PC-9 (cell line): ENCODE measurements at regions of chr1 and their contacts with region 1.

Region 1: GRCh38 chr1:228131766-228132165 is 8.3 kb upstream of the GUK1 start:
- DNase-seq: peak; percentile 27 to 63
- H3K4me3 ChIP-seq: peak overlapping the region; percentile 62; the same call in 1 of the 2 replicates
- H3K27ac ChIP-seq: peak overlapping the region; percentile 82
- H3K4me1 ChIP-seq: peaks cover 16% of the 10 kb centered on the region
- H3K27me3 ChIP-seq: no peaks in the 10 kb centered on the region
- CTCF ChIP-seq: no peak

Region 2: DNA sequence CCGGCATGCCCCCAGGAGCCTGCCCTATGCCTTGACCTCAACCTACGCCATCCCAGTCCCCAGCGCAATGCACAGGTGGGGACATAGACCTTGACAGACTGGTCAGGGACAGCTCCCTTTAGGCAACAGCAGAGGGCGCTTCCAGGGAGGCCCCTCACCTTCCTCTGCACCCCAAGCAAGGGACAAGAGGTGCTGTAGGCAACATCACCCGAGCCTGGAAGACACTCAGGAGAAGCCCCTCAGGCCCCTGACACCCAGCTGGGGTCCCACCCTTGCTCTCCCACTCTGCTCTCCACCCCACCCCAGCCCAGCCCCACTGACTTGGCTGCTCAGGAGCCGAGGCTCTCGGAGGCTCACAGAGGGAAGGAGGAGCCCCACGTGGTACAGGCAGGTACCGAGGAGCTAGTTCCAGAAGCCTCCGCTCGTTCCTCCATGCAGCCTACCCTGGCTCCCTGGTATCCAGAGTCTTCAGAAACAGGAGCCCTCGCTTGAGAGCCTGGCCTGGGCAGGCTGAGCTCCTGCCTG is 127.4 kb before region 1 on chr1:
- CTCF ChIA-PET with region 1: interaction called, 21 read pairs
- POLR2A ChIA-PET with region 1: no interaction called
- intact Hi-C with region 1: loop called (anchors 1 kb)
- DNase-seq: peak; percentile 43 to 59
- H3K4me3 ChIP-seq: no peak overlapping the region
- H3K27ac ChIP-seq: no peak overlapping the region
- H3K4me1 ChIP-seq: no peaks in the 10 kb centered on the region
- H3K27me3 ChIP-seq: peaks cover 13% of the 10 kb centered on the region
- CTCF ChIP-seq: peak; percentile 80

Region 3: DNA sequence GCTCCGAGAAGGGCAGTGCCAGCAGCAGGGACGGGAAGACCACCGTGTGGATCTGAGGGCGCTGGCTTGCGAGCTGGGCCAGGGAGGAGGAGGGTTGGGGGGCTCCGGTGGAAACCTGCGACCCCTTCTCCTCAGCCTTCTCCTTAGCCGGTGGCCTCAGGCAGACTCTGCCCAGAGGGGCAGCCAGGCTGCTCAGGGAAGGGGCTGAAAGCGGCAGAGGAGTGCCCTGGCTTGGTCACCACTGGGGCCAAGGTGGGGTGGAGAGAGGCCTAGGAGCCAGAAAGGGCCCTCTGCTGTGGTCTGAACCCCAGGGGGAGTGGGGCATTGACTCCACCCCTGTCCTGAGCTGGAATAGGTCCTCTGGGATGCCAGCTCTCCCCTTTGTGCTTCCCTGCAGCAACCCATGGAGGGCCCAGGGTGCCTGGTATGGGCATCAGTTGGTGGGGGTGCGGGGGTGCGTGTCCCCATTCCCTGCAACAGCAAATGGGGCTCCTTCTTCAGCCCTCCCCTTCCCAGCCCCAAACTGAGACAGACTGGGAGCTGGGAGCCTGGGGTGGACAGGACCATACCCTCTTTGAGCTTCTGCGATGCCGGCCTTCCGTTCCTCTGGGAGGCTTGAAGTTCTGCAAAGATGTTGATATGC is 27.4 kb after region 1 on chr1:
- CTCF ChIA-PET with region 1: interaction called, 15 read pairs
- POLR2A ChIA-PET with region 1: no interaction called
- intact Hi-C with region 1: no loop called
- DNase-seq: no peak
- H3K4me3 ChIP-seq: no peak overlapping the region
- H3K27ac ChIP-seq: no peak overlapping the region
- H3K4me1 ChIP-seq: no peaks in the 10 kb centered on the region
- H3K27me3 ChIP-seq: no peaks in the 10 kb centered on the region
- CTCF ChIP-seq: no peak

Region 4: GRCh38 chr1:228212966-228213844 is 81.4 kb after region 1 on chr1:
- CTCF ChIA-PET with region 1: interaction called, 3 read pairs
- POLR2A ChIA-PET with region 1: interaction called, 3 read pairs
- intact Hi-C with region 1: loop called (anchors 1 kb)
- DNase-seq: peak; percentile 71 to 88
- H3K4me3 ChIP-seq: peak overlapping the region; percentile 62
- H3K27ac ChIP-seq: no peak overlapping the region
- H3K4me1 ChIP-seq: peaks cover 9% of the 10 kb centered on the region
- H3K27me3 ChIP-seq: no peaks in the 10 kb centered on the region
- CTCF ChIP-seq: peak; percentile 60

Region 5: GRCh38 chr1:228378090-228378872 is 246.5 kb after region 1 on chr1:
- CTCF ChIA-PET with region 1: no interaction called
- POLR2A ChIA-PET with region 1: no interaction called
- intact Hi-C with region 1: loop called (anchors 5 kb)
- DNase-seq: peak; percentile 78 to 95
- H3K4me3 ChIP-seq: peak overlapping the region; percentile 67
- H3K27ac ChIP-seq: no peak overlapping the region
- H3K4me1 ChIP-seq: peaks cover 15% of the 10 kb centered on the region
- H3K27me3 ChIP-seq: no peaks in the 10 kb centered on the region
- CTCF ChIP-seq: peak; percentile 82

Region 6: DNA sequence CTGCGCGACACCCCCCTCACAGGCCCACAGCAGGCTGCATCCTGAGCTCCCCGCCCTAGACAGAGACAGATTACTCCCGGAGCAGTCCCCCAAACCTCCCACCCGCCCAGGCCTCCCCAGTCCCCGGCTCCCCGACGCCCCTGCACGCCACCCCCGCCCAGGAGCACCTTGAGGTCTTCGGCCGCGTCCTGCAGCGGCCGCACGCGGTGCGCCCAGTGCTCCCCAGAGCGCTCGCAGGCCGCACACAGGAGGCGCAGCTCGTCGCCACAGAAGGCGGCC is 274.2 kb after region 1 on chr1:
- CTCF ChIA-PET with region 1: no interaction called
- POLR2A ChIA-PET with region 1: no interaction called
- intact Hi-C with region 1: loop called (anchors 2 kb)
- DNase-seq: no peak
- H3K4me3 ChIP-seq: peak overlapping the region; percentile 95
- H3K27ac ChIP-seq: peak overlapping the region; percentile 77
- H3K4me1 ChIP-seq: peaks cover 45% of the 10 kb centered on the region
- H3K27me3 ChIP-seq: no peaks in the 10 kb centered on the region
- CTCF ChIP-seq: no peak

Region 7: GRCh38 chr1:228781161-228781808 is 649.5 kb after region 1 on chr1:
- CTCF ChIA-PET with region 1: no interaction called
- POLR2A ChIA-PET with region 1: no interaction called
- intact Hi-C with region 1: no loop called
- DNase-seq: no peak
- H3K4me3 ChIP-seq: no peak overlapping the region
- H3K27ac ChIP-seq: no peak overlapping the region
- H3K4me1 ChIP-seq: no peaks in the 10 kb centered on the region
- H3K27me3 ChIP-seq: peaks cover 40% of the 10 kb centered on the region
- CTCF ChIP-seq: no peak